Right ventricle myocardium superior (tissue), 1 donor: ENCODE measurements at regions of chr1 and their contacts with region 1.

Region 1: DNA sequence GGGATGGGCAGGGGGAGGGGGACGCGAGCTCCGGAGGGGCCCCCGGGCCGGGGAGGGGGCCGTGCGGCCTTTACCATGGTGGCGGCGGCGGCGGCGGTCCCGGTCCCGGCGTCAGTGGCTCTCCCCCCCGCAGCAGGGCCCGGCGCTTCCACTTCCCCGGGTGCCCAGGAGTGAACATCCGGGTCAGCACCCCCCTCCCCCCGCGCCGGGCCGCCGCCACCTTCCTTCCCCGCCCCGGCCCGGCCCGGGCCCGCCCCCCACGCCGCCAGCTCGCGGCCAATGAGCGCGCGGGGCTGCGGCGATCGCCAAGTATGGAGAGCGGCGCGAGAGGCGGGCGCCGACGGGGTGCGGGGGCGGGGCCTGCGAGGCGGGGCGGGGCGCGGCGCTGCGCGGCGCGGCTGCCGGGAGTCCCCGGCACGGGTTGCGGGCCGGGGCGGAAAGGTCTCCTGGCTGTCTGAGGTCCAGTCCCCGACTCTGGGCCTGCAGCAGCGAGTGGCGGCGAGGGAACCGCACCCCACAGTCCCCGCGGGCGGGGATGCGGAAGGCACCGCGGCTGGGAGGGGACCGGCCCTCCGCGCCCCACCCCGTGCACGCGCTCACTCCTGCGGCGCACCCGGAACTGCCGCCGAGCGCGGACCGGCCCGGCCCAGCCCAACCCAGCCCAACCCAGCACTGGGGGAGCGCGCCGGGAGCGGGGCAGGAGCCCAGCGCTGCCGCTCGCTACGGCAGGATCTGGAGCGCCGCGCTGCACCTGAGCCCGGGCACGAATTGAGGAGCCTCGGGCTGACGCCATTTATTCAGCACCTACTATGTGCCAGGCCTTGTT is at the start of gene CAPZB:
- DNase-seq: peak; percentile 97
- ATAC-seq: peak; percentile 91
- total RNA-seq, gene CAPZB: 222 TPM

Region 2: DNA sequence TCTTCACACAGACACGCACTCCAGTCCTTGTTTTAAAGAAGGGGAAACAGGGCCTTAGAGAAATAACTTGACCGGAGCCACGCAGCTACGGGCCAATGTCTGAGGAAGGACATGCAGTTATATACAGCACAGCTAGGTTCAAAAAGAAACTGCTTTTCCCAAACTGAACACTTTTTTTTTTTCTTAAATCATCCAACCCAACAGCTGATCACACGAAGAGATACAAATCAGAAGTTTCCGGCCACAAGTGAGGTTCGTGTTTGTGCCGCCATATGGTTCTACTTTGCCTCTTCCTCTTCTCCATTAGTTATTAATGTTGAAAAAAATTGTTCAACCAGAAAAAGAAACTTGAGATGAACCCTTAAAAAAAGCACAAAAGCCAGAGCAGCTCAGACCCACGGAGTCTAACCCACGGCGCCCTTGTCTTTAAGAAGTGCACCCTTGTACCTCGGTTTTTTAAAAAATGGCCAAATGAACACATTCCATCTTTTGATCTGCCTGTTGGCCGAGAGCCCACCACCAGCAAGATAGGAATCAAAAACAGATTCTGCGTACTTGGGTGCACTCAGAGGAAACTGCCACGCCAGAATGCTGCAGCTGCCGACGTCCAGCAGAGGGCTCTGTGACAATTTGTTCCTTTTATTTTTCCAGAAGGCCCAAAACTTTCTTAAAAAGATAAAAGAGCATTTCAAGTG is 94.5 kb before region 1 on chr1:
- intact Hi-C with region 1: loop called (anchors 10 kb)
- DNase-seq: peak; percentile 64
- ATAC-seq: peak; percentile 60

Region 3: GRCh38 chr1:19439464-19440171 is 46.0 kb before region 1 on chr1:
- intact Hi-C with region 1: loop called (anchors 10 kb)
- DNase-seq: peak; percentile 77
- ATAC-seq: peak; percentile 63

Region 4: DNA sequence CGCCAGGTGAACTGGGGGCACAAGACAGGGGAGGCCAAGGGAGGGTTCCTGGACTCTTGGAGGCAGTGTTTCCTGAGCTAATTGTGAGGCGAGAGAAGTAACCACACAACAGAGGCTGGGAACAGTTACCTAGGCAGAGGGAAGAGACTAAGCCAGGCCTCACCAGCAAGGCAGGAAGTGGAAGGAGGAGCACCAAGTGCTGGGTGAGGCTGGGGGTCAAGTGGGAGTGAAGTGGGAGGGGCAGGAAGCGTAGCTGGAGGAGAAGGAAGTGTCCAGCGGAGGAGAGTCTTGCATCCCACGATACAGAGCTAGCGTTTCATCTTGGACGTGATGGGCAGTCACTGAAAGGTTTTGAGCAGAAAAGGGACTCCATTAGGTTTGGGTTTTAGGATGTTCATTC is 48.1 kb after region 1 on chr1:
- intact Hi-C with region 1: no loop called
- DNase-seq: peak; percentile 51
- ATAC-seq: peak; percentile 64

Region 5: DNA sequence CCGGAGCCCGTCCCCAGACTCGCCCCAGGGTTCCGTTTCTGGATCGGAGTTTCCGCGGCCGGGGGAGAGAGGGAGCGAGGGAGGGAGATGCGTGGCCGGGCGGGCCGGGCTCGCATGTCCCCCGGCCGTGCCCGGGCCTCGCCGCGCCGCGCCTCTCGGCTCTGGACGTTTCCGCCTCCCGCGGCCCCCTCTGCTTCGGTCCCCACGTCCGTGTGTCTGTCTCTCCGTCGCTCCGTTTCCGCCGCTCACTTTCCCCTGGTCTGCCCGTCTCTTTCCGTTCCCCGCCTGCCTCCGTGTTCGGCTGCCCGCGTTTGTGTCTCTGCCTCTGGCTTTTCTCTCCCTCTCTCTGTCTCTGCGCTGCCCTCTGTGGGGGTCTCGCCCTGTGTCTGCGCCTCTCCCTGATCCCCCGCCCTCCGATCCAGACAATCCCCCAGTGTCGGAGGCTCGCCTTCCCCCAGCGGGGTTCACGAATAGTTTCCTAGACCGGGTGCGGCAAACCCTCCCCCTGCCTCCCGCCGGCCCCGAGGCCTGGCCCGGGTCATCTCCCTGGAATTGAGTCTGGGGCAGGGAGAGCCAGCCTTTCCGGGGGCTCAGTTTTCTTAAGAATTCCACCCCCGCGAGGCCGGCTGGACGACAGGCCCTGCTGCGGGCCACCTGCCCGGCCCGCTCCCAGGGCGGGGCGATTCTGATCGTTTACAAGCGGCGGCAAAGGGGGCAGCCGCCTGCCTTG is 159.3 kb after region 1 on chr1:
- intact Hi-C with region 1: loop called (anchors 5 kb)
- DNase-seq: no peak
- ATAC-seq: peak; percentile 8

Region 6: DNA sequence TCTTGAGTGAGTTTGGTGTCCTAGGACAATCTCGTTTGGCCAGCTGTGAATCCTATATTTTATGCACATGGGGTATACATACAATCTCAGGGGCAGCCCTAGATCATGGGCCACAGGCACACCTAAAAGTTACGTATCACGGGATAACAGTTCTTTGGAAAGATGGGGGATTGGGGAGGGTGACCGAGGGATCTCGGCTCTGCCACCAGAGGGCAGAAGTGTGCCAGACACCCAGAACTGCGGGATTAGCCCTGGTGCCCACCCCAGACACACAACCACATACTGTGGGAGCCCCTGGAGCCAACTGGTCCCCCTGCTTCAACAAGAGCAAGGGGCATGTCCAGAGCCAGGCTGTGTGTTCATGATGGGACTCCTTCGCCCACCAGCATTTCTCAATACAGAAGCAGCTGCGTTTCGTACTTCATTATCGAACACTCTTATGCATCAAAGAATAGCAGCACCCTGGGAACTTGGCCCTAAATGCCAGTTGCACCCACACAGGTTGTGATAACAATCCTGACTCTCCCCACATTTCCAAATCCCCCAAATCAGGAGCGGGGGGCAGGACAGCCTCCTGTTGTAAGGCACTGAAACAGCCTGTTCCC is 276.7 kb after region 1 on chr1:
- intact Hi-C with region 1: no loop called
- DNase-seq: no peak
- ATAC-seq: no peak